ENCODE measurements at regions of chr1 and their contacts with region 1.

Region 1: DNA sequence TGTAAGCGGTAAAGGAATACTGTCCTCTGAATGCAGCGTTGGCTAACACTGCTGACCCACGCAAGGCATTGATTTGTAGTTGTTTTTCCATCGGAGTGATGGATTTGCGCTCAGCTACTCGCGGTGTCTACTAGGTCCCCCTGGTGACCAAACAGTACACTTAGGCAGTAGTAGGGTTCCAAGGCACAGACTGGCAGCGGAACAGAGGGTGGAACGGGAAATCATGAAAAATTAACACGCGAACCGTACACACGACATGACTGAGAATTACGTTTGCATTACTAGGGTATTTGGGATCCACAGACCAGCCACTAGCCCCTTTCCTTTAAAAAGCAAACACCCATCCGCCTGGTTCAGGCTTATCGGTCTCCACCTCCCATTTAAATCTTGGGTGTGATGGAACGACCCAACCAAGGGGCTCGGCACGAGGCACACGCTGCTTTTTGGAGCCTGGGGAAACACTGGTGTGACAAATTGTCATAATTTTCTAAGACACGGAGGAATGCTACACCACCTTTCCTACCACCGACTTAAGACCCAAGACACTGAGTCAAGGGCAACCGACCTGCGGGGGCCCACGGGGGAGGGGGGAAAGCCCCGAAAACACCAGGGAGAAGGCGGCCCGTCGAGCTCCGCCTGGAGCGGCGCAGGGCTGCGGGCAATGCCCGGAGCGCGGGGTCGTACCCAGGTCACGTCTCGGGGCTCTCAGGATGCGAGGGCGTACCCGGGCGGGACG is 699 bp downstream of the DIPK1A start:
- DNase-seq: peak; percentile 73
- CTCF ChIP-seq: peak; percentile 77

Region 2: DNA sequence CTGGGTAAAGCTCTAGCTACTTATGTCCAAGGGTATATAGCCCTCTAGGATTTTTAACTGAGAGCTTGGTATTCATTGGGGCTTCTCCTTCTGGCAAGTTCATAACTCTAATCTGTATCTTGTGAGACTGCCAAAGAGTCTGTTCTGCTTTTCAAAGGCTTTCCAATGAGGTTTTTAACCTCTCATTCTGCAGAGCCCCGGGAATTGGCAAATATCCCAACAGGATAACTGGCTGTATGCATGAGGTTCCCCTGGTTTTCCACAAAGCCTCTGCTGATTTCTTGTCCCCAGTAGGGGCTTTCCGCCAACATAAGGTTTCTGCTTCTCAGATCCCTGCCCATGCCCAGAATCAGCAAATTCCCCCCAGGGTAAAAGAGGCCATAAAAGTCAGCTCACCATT is 87.8 kb before region 1 on chr1:
- CTCF ChIA-PET with region 1: interaction called, 11 read pairs
- POLR2A ChIA-PET with region 1: no interaction called
- DNase-seq: no peak
- CTCF ChIP-seq: no peak

Region 3: GRCh38 chr1:92975551-92976232 is 15.1 kb after region 1 on chr1:
- CTCF ChIA-PET with region 1: interaction called, 66 read pairs
- POLR2A ChIA-PET with region 1: interaction called, 13 read pairs
- DNase-seq: peak; percentile 58
- CTCF ChIP-seq: no peak

Measured in GM10248 (cell line).